ENCODE measurements at regions of chr15 and their contacts with region 1.

Region 1: DNA sequence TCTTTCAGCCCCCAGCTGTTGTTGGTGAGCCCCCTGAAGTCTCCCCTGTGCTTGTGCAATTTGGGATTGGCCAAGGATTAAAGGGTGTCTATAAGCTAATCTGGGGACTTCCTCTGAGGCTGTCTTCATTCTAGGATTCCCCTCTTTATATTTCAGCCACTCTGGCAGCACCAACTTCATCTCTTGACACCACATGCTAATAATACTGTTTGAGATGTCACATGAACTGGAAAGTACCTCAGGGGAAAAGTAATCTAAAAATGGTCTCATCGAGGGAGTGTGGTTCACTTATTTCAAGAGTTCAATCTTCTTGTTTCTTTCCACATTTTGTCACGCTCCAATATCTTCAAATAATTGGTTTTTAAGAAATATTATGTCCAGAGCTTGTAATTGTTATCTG is 279.2 kb upstream of the TMC3 start:
- DNase-seq: no peak
- H3K4me3 ChIP-seq: no peak overlapping the region
- H3K27ac ChIP-seq: no peak overlapping the region
- H3K4me1 ChIP-seq: no peaks in the 10 kb centered on the region
- H3K27me3 ChIP-seq: no peaks in the 10 kb centered on the region
- CTCF ChIP-seq: no peak

Region 2: DNA sequence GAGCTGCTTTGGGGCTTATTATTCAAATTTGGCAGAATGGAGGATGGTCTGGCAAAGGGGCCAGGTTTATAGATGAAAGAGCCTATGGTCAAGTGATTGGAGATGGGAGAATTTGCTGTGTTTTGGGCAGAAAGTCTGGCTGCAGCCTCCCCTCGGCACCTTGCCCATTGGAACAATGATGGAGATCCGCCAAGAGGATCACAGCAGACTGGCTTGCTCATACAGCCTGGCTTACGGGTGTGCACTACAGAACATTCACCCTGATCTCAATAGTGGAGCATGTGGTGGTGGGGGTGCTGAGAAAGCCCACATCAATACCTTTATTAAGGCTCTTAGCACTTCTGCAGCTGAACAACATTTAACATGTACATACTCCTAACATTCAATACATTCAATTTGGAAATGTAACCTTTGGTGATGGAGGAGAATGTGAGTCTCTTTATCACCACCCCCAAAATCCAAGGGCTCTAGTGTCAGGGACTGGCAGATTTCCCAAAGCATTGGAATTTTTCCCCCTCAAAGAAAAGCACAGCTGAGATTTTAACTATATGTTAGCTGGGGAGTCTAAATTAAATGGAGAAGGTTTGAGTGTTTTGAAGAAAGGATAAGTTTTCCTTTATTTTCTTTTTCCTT is 160.8 kb before region 1 on chr15:
- CTCF ChIA-PET with region 1: no interaction called
- dilution Hi-C with region 1: no loop called
- in situ Hi-C with region 1: no loop called
- intact Hi-C with region 1: no loop called
- DNase-seq: peak; percentile 29
- H3K4me3 ChIP-seq: no peak overlapping the region
- H3K27ac ChIP-seq: no peak overlapping the region
- H3K4me1 ChIP-seq: peaks cover 4% of the 10 kb centered on the region
- H3K27me3 ChIP-seq: no peaks in the 10 kb centered on the region
- CTCF ChIP-seq: no peak

Region 3: GRCh38 chr15:81612630-81613029 is 40.6 kb before region 1 on chr15:
- CTCF ChIA-PET with region 1: no interaction called
- dilution Hi-C with region 1: loop called (anchors 5 kb)
- in situ Hi-C with region 1: no loop called
- intact Hi-C with region 1: no loop called
- DNase-seq: no peak
- H3K4me3 ChIP-seq: no peak overlapping the region
- H3K27ac ChIP-seq: no peak overlapping the region
- H3K4me1 ChIP-seq: no peaks in the 10 kb centered on the region
- H3K27me3 ChIP-seq: no peaks in the 10 kb centered on the region
- CTCF ChIP-seq: no peak

Region 4: GRCh38 chr15:81723701-81724100 is 70.4 kb after region 1 on chr15:
- CTCF ChIA-PET with region 1: no interaction called
- dilution Hi-C with region 1: no loop called
- in situ Hi-C with region 1: no loop called
- intact Hi-C with region 1: no loop called
- DNase-seq: no peak
- H3K4me3 ChIP-seq: no peak overlapping the region
- H3K27ac ChIP-seq: no peak overlapping the region
- H3K4me1 ChIP-seq: no peaks in the 10 kb centered on the region
- H3K27me3 ChIP-seq: no peaks in the 10 kb centered on the region
- CTCF ChIP-seq: no peak

Measured in mammary epithelial cell (primary cell).